ENCODE measurements at regions of chr5 and their contacts with region 1.

Region 1: DNA sequence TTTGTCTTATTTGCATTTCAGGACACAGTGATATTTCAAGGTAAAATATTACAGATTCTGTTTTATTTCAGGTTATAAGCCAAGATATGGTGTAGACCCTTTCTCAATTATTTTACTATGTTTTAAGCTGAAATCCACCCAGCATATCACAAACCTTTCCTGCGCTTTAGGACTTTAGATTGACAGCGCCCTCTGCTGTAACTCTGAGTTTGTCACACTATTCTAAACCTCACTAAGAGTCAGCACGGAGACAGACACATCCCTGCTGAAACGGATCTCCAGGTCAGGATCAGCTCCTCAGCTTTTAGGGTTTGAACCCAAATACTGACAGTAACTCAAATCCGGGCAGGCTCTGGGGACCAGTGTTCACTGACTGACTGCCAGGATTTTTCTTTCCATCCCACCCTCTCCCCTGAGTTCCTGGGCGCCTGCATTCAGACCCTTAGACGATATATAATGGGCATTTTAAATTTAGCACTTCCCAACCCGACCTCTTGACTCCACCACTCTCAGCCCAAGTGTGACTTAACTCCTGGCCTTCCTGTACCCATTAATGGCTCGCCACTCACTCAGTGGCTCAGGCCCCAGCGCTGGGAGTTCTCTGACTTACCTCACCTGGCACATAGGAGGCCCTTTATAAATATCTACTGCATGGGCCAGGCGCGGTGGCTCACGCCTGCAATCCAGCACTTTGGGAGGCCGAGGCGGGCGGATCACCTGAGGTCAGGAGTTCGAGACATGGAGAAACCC is 33.5 kb downstream of the TLX3 start:
- DNase-seq: peak in 1 of 2 donors; percentile 15
- ATAC-seq: peak in 4 of 8 donors; percentile 39 to 72 (median 61)
- H3K4me3 ChIP-seq: no peak overlapping the region
- H3K27ac ChIP-seq: no peak overlapping the region
- H3K4me1 ChIP-seq: no peaks in the 10 kb centered on the region
- H3K27me3 ChIP-seq: peaks cover 0 to 46% (median 33%) of the 10 kb centered on the region in 7 donors
- CTCF ChIP-seq: peak; percentile 11 to 74 (median 62)

Region 2: GRCh38 chr5:170638454-170639220 is 703.9 kb before region 1 on chr5:
- intact Hi-C with region 1: loop called in 6 of 10 experiments (anchors 2 to 10 kb)
- DNase-seq: peak; percentile 61 to 69
- ATAC-seq: peak; percentile 46 to 76 (median 64)
- H3K4me3 ChIP-seq: no peak overlapping the region
- H3K27ac ChIP-seq: no peak overlapping the region
- H3K4me1 ChIP-seq: peaks cover 0 to 26% (median 11%) of the 10 kb centered on the region in 9 donors
- H3K27me3 ChIP-seq: no peaks in the 10 kb centered on the region
- CTCF ChIP-seq: peak; percentile 71 to 94 (median 87)

Region 3: GRCh38 chr5:170747851-170748250 is 594.7 kb before region 1 on chr5:
- intact Hi-C with region 1: loop called in 8 of 10 experiments (anchors 5 to 10 kb)
- DNase-seq: peak; percentile 25 to 40
- ATAC-seq: peak in 7 of 8 donors; percentile 2 to 47 (median 18)
- H3K4me3 ChIP-seq: no peak overlapping the region
- H3K27ac ChIP-seq: peak overlapping the region; percentile 46 to 92 (median 86)
- H3K4me1 ChIP-seq: peaks cover 18 to 87% (median 71%) of the 10 kb centered on the region in 9 donors
- H3K27me3 ChIP-seq: peaks cover 0 to 21% (median 0%) of the 10 kb centered on the region in 7 donors
- CTCF ChIP-seq: peak in 8 of 9 donors; percentile 23 to 64 (median 52)

Region 4: DNA sequence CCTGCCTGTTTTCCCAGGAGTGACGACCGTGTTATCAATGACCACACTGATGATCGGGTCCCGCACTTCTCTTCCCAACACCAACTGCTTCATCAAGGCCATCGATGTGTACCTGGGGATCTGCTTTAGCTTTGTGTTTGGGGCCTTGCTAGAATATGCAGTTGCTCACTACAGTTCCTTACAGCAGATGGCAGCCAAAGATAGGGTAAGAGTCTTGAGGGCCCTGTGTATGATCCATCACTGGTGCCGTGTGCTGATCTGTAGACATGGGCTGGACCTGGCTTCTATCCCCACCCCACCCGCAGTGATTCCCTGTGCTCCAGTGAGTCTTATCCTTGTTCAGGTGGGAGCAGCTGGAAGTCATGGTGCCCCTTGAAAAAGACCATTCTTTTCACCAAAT is 533.0 kb before region 1 on chr5:
- intact Hi-C with region 1: loop called in 2 of 10 experiments (anchors 5 to 10 kb)
- DNase-seq: no peak
- ATAC-seq: peak in 2 of 8 donors; percentile 33 to 39
- H3K4me3 ChIP-seq: no peak overlapping the region
- H3K27ac ChIP-seq: no peak overlapping the region
- H3K4me1 ChIP-seq: no peaks in the 10 kb centered on the region
- H3K27me3 ChIP-seq: peaks cover 0 to 8% (median 0%) of the 10 kb centered on the region in 7 donors
- CTCF ChIP-seq: peak in 4 of 9 donors; percentile 15 to 40 (median 28)

Region 5: GRCh38 chr5:171207256-171207847 is 135.2 kb before region 1 on chr5:
- intact Hi-C with region 1: loop called (anchors 1 to 10 kb)
- DNase-seq: no peak
- ATAC-seq: no peak
- H3K4me3 ChIP-seq: no peak overlapping the region
- H3K27ac ChIP-seq: no peak overlapping the region
- H3K4me1 ChIP-seq: no peaks in the 10 kb centered on the region
- H3K27me3 ChIP-seq: peaks cover 0 to 3% (median 0%) of the 10 kb centered on the region in 7 donors
- CTCF ChIP-seq: peak; percentile 19 to 69 (median 55)

Region 6: DNA sequence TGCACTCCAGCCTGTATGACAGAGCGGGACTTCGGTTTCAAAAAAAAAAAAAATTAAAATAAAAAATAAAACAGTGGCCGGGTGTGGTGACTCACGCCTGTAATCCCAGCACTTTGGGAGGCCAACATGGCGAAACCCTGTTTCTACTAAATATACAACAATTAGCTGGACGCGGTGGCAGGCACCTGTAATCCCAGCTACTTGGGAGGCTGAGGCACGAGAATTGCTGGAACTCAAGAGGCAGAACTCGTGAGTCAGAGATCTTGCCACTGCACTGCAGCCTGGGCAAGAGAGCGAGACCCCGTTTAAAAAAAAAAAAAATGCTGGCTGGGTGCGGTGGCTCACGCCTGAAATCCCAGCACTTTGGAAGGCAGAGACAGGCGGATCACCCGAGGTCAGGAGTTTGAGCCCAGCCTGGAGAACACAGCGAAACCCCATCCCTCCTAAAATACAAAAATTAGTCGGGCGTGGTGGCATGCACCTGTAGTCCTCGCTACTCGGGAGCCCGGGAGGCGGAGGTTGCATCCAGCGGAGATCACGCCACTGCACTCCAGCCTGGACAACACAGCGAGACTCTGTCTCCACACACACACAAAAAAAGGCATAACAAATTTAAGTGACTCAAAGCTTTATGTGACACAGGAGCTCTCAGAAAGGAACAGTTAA is 43.6 kb after region 1 on chr5:
- intact Hi-C with region 1: no loop called
- DNase-seq: no peak
- ATAC-seq: no peak
- H3K4me3 ChIP-seq: peak overlapping the region in 1 of 10 donors; percentile 78
- H3K27ac ChIP-seq: no peak overlapping the region
- H3K4me1 ChIP-seq: peaks cover 0 to 36% (median 30%) of the 10 kb centered on the region in 9 donors
- H3K27me3 ChIP-seq: no peaks in the 10 kb centered on the region
- CTCF ChIP-seq: no peak